Activated CD4-positive, alpha-beta T cell treated with anti-CD3 and anti-CD28 coated beads for 36 hours (primary cell): ENCODE measurements at regions of chr1 and their contacts with region 1.

Region 1: DNA sequence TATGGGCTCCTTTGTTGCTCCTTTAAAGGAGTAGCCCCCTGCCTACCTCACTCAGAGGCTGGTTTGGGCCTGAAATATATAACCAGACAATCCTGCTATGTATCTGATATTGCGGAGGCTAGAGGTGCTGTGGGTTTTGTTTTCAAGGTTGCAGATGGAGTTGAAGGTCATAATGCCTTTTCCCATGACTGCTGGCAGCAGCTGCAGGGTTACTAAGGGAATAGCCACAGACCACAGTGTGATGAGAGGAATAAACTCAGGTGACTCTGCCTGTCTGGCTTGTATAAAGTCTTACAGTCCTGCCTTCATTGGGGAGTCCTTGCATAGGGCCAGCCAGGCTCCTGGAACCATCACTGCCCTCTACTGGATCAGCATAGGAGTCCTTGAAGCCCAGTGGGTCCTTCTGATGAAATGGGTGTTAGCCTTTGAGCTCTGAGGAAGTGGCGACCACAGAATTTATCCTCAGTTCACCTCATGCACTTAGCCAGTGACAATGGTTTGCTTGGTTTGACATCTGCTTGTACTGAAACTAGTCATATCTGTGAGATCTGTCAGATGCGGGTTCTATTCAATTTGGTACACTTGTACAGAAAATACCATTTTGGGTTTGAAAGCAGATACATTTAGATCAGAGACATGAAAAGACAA is 174.4 kb upstream of the HMCN1 start:
- DNase-seq: peak; percentile 68
- ATAC-seq: peak; percentile 90
- H3K4me3 Mint-ChIP-seq: no peak overlapping the region
- H3K27ac Mint-ChIP-seq: peak overlapping the region; percentile 59
- H3K4me1 Mint-ChIP-seq: peaks cover 42% of the 10 kb centered on the region
- H3K27me3 Mint-ChIP-seq: no peaks in the 10 kb centered on the region

Region 2: DNA sequence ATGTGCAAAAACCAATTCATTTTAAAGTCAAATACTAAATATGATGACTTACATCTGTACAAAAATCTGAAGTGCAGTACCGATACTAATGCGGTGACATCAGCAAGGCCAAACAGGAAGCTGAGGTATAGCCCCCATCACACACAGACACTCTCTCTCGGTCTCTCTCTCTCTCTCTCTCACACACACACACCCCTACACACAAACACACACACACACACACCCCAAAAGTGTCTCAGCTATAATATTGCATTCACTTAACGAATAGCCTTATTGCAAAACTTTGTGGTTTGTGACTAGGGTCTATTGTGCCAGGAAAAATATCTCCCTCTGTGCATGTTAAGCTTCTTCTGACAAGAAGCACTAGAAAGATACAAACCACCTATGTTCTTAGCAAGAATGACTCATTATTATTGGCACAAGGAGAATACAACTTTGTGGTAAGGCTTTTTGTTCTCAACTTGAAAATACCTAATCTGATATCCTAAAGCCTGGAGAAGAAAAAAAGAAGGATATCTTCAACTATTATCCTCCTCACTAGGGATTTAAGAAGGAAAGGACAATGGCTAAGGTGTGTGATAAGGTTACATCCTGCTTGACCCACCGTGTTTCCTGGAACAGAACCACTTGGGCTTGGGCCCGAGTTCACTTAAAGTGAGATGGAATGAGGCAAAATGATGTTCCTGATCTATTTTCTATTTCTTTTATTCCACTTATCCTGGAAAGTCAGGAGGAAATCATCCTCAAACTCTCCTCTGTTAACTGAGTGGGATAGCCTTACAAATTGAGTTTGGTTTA is 692.6 kb before region 1 on chr1:
- CTCF ChIA-PET with region 1: no interaction called
- POLR2A ChIA-PET with region 1: no interaction called
- intact Hi-C with region 1: loop called in 1 of 2 experiments (anchors 10 kb)
- DNase-seq: peak; percentile 75
- ATAC-seq: peak; percentile 85
- H3K4me3 Mint-ChIP-seq: peak overlapping the region; percentile 32
- H3K27ac Mint-ChIP-seq: peak overlapping the region; percentile 90
- H3K4me1 Mint-ChIP-seq: peaks cover 46% of the 10 kb centered on the region
- H3K27me3 Mint-ChIP-seq: no peaks in the 10 kb centered on the region

Region 3: GRCh38 chr1:185439727-185440415 is 119.9 kb before region 1 on chr1:
- CTCF ChIA-PET with region 1: interaction called, 3 read pairs
- POLR2A ChIA-PET with region 1: no interaction called
- intact Hi-C with region 1: loop called (anchors 1 to 2 kb)
- DNase-seq: peak; percentile 54
- ATAC-seq: peak; percentile 87
- H3K4me3 Mint-ChIP-seq: no peak overlapping the region
- H3K27ac Mint-ChIP-seq: no peak overlapping the region
- H3K4me1 Mint-ChIP-seq: peaks cover 7% of the 10 kb centered on the region
- H3K27me3 Mint-ChIP-seq: no peaks in the 10 kb centered on the region

Region 4: DNA sequence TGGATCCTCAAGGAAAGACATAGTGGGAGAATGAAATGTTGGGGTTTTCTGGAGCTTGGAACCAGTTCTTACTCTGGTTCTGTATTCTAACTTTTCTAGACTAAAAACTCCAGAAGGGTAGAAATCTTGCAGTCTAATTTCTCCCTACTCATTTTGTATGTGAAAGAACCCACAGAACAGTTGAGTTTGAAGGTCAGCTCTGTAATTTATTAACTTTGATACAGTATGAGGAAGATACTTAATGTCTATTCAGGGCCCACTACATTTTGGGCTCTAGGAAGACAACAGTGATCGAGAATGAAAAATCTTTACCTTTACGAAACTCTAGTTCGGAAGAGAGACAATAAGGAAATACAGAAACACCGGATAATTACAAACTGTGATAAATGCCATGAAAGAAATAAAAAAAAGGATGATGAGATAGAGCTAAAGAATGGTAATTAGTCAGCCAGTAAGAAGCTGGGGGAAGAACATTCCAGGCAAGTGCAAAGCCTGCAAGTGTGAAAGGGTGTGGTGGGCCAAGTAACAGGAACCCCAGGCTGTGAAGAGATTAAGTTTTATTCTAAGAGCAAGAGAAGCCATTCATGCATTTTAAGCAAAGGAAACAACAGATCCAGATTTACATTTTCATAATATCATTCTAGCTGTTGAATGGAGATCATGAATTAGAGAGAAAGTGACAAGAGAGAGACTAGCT is 14.5 kb after region 1 on chr1:
- CTCF ChIA-PET with region 1: interaction called, 12 read pairs
- POLR2A ChIA-PET with region 1: no interaction called
- intact Hi-C with region 1: no loop called
- DNase-seq: no peak
- ATAC-seq: no peak
- H3K4me3 Mint-ChIP-seq: no peak overlapping the region
- H3K27ac Mint-ChIP-seq: no peak overlapping the region
- H3K4me1 Mint-ChIP-seq: peaks cover 17% of the 10 kb centered on the region
- H3K27me3 Mint-ChIP-seq: no peaks in the 10 kb centered on the region

Region 5: DNA sequence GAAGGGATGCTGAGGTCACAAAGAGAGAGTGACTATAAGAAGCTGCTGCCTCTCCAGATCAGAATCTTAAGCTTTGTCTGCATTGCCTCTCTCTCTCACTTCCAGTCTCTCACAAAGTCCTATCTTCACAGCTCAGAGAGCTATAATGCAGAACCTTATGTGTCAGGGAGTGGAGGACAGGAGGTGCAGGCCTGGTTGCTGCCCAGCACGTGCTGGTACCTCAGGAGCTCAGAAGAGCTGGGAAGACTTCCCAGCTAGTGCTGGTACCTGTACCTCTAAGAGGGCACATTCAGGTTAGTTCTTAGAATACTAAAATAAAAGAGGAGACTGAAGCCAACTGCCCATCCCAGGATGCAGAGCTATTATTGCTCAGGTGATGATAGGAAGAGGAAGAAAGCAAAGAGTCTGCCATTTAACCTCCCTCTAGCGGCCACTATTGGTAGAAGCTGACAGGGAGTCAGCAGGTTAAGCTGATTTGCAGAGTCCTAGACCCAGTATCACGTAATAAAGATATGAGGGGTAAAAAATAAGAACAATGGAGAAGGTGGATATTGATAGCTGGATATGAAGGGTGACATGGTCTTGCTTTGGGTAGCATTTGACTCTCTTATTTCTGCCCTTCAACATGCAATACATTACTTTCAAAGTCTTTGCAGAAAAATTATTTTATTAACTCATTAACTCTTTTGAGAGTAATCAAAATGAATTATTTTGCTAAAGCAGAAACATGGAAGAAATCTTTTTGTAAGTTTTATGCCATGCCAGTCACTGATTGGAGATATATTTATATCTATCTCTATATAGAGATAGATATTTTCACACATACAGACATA is 36.2 kb after region 1 on chr1:
- CTCF ChIA-PET with region 1: interaction called, 10 read pairs
- POLR2A ChIA-PET with region 1: no interaction called
- intact Hi-C with region 1: no loop called
- DNase-seq: peak; percentile 61
- ATAC-seq: peak; percentile 75
- H3K4me3 Mint-ChIP-seq: no peak overlapping the region
- H3K27ac Mint-ChIP-seq: no peak overlapping the region
- H3K4me1 Mint-ChIP-seq: peaks cover 10% of the 10 kb centered on the region
- H3K27me3 Mint-ChIP-seq: no peaks in the 10 kb centered on the region

Region 6: DNA sequence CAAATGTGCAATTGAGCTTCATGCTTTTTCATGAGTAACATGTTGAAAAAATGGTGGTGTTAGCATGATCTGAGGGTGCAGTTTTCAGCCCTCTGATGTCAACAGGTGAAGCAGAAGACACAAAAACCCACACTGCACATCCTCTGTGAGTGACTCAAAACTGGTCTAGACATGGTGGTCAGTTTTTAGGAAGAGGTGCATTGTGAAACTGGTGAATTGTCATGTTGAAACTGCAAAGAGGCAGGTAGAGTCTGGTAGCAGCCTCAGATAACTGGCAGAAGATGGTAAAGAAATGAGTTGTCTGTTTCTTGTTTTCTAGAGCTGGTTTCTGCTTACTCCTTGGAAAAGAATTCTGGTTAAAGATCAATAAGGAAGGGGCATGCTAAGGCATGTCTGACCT is 77.0 kb after region 1 on chr1:
- CTCF ChIA-PET with region 1: no interaction called
- POLR2A ChIA-PET with region 1: no interaction called
- intact Hi-C with region 1: loop called (anchors 1 to 2 kb)
- DNase-seq: peak; percentile 63
- ATAC-seq: peak; percentile 95
- H3K4me3 Mint-ChIP-seq: no peak overlapping the region
- H3K27ac Mint-ChIP-seq: peak overlapping the region; percentile 69
- H3K4me1 Mint-ChIP-seq: peaks cover 14% of the 10 kb centered on the region
- H3K27me3 Mint-ChIP-seq: no peaks in the 10 kb centered on the region